ENCODE measurements at regions of chr6 and their contacts with region 1.

Region 1: GRCh38 chr6:46419576-46420002 is 71.7 kb downstream of the RCAN2 start:
- DNase-seq: peak; percentile 77
- H3K4me3 ChIP-seq: no peak overlapping the region
- H3K27ac ChIP-seq: no peak overlapping the region
- H3K4me1 ChIP-seq: no peaks in the 10 kb centered on the region
- CTCF ChIP-seq: peak; percentile 92

Region 2: DNA sequence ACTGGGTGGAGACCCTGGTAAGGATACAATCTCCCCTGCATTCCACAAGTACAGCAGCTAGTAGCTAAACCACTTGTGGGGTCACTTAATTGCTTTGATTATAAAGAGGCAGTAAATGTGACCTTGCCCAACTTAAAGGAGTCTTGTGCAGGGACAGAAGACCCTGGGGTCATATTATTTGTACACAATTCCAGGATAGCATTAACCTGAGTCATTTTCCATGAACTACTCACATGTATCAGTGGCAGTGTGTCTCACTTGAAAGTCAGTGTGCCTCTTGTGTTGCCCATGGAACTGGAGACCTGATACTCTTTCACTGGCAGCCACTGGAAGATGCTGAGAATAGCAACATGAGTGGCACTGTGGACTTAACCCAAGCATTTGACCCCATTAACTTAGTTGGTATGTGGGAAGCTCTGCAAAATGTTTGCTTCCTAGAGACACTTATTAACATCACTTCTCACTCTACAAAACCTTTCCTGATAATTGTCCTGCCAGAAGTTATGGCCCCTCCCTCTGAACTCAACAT is 432.8 kb before region 1 on chr6:
- CTCF ChIA-PET with region 1: no interaction called
- POLR2A ChIA-PET with region 1: no interaction called
- intact Hi-C with region 1: no loop called
- DNase-seq: no peak
- H3K4me3 ChIP-seq: no peak overlapping the region
- H3K27ac ChIP-seq: no peak overlapping the region
- H3K4me1 ChIP-seq: no peaks in the 10 kb centered on the region
- CTCF ChIP-seq: no peak

Region 3: GRCh38 chr6:46491628-46492547 is 72.3 kb after region 1 on chr6:
- CTCF ChIA-PET with region 1: no interaction called
- POLR2A ChIA-PET with region 1: no interaction called
- intact Hi-C with region 1: loop called (anchors 5 kb)
- DNase-seq: peak; percentile 39
- H3K4me3 ChIP-seq: peak overlapping the region; percentile 72
- H3K27ac ChIP-seq: no peak overlapping the region
- H3K4me1 ChIP-seq: peaks cover 6% of the 10 kb centered on the region
- CTCF ChIP-seq: peak; percentile 79

Region 4: DNA sequence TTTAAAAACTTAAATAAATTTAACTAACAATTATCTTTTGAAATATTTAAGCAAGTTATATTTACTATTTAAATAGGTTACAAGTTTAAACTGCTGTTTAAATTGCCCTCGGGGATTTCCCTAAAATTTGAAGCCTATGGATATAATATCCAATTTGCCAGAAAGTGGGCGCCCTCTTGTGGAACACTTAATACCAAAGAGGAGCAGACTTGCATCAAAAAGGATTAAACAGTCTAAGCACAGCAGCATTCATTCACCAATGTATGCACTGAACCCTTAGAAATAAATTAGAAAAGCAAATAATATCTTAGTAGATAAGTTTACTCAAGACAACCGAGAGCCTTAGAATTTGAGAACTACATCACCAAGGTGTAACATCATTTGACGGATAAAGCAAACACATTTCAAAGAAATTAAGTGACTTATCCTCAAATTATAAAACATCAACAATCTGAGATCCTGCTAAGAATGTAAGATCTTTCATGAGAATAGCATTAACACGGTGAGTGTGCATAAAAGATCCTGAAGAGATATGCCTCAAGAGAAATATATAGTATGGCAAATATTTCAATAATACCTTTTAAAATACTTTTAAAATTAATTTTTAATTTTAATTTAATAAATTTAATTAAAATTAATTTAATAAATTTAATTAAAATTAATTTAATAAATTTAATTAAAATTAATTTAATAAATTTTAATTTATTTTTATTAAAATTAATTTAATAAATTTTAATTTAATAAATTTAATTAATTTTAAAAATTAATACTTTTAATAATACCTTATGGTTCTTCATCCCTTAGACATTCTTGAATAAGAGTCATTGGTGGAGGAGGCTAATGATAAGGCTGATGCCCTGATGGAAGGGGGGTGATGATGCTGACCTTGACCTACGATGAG is 362.1 kb after region 1 on chr6:
- CTCF ChIA-PET with region 1: no interaction called
- POLR2A ChIA-PET with region 1: no interaction called
- intact Hi-C with region 1: loop called (anchors 1 kb)
- DNase-seq: peak; percentile 72
- H3K4me3 ChIP-seq: no peak overlapping the region
- H3K27ac ChIP-seq: no peak overlapping the region
- H3K4me1 ChIP-seq: no peaks in the 10 kb centered on the region
- CTCF ChIP-seq: peak; percentile 98

Region 5: GRCh38 chr6:46862381-46862780 is 442.8 kb after region 1 on chr6:
- CTCF ChIA-PET with region 1: no interaction called
- POLR2A ChIA-PET with region 1: no interaction called
- intact Hi-C with region 1: loop called (anchors 5 kb)
- DNase-seq: no peak
- H3K4me3 ChIP-seq: no peak overlapping the region
- H3K27ac ChIP-seq: no peak overlapping the region
- H3K4me1 ChIP-seq: no peaks in the 10 kb centered on the region
- CTCF ChIP-seq: 0 out of 2 replicates have a peak, but pooled peaks have one; percentile 28

Measured in OCI-LY7 (cell line).